Activated naive CD4-positive, alpha-beta T cell treated with anti-CD3 and anti-CD28 coated beads for 36 hours (primary cell): ENCODE measurements at regions of chr13 and their contacts with region 1.

Region 1: GRCh38 chr13:25847145-25847544 is 204.7 kb downstream of the SHISA2 start:
- DNase-seq: peak; percentile 22
- H3K4me3 Mint-ChIP-seq: no peak overlapping the region
- H3K27ac Mint-ChIP-seq: peak overlapping the region; percentile 22
- H3K4me1 Mint-ChIP-seq: peaks cover 35% of the 10 kb centered on the region
- H3K27me3 Mint-ChIP-seq: peaks cover under 1% of the 10 kb centered on the region

Region 2: GRCh38 chr13:25806264-25806974 is 40.7 kb before region 1 on chr13:
- CTCF ChIA-PET with region 1: no interaction called
- intact Hi-C with region 1: loop called (anchors 1 kb)
- DNase-seq: peak; percentile 7
- H3K4me3 Mint-ChIP-seq: no peak overlapping the region
- H3K27ac Mint-ChIP-seq: peak overlapping the region; percentile 50
- H3K4me1 Mint-ChIP-seq: peaks cover 12% of the 10 kb centered on the region
- H3K27me3 Mint-ChIP-seq: peaks cover 18% of the 10 kb centered on the region

Region 3: DNA sequence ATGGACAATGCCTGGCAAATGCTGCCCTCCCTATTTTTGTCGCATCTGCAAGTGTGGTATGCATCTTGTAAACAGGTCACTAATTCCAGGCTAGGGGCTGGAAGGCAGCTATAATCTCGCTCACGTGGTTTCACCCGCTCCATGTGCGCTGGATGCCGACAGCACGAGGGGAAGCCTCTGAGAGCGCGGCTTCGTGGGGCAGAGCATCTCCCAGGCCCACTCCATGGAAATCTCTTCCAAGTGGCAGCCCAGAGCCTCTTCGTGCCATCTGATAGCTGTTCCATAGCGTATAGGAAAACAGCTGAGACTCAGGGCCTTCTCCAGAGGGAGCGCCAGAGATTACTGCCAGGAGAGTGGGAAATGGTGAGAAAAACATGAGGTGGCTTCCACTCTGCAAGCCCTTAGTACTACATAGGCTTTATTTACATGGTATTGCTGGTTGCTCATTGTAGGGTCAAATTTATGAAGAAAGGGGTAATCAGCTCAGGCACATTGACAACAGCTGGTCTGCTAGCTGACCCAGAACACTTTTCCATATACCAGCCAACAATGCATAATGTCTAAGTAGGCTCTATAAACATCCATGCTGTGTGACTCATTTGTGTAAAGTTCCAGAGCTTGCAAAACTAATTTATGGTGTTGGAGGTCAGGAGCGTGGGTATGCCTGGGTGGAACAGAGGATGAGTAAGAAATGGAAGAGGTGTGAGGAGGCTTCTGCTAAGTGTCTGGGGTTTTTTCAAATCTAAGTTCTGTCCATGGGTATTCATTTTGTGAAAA is 39.5 kb after region 1 on chr13:
- CTCF ChIA-PET with region 1: no interaction called
- intact Hi-C with region 1: loop called (anchors 1 kb)
- DNase-seq: peak; percentile 51
- H3K4me3 Mint-ChIP-seq: no peak overlapping the region
- H3K27ac Mint-ChIP-seq: peak overlapping the region; percentile 16
- H3K4me1 Mint-ChIP-seq: peaks cover 66% of the 10 kb centered on the region
- H3K27me3 Mint-ChIP-seq: no peaks in the 10 kb centered on the region

Region 4: DNA sequence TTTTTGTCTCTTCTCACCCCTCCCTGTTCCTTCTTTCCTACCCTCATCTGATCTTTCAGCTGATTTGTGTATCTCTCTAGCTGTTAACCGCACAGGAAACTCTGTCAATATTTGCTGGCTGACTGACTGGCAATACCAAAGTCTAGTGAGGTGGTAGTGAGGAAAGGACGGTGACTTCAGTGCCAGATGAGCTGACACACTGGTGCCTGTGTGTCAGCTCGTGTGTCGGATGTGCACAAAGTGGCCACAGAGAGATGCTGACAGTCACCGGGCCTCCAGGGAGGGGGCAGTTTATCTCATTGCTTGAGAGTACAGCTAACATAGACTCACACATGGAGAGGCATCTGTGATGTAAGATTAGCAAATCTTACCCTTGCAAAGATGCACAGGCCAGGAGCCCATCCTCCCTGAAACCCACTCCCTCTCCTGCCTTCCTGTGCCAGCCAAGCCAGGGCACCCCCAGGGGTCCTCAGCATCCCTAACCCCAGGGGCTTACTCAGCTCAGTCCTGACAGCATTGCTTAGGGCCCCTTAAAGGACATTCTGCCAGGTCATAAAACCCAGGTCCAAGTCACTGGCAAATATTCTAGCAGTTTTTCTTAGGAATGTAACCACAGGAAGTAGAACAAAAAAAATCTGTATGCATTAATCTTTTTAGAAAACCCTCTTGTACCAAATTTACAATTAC is 124.5 kb after region 1 on chr13:
- CTCF ChIA-PET with region 1: no interaction called
- intact Hi-C with region 1: loop called (anchors 1 kb)
- DNase-seq: peak; percentile 76
- H3K4me3 Mint-ChIP-seq: no peak overlapping the region
- H3K27ac Mint-ChIP-seq: peak overlapping the region; percentile 46
- H3K4me1 Mint-ChIP-seq: peaks cover 42% of the 10 kb centered on the region
- H3K27me3 Mint-ChIP-seq: no peaks in the 10 kb centered on the region

Region 5: DNA sequence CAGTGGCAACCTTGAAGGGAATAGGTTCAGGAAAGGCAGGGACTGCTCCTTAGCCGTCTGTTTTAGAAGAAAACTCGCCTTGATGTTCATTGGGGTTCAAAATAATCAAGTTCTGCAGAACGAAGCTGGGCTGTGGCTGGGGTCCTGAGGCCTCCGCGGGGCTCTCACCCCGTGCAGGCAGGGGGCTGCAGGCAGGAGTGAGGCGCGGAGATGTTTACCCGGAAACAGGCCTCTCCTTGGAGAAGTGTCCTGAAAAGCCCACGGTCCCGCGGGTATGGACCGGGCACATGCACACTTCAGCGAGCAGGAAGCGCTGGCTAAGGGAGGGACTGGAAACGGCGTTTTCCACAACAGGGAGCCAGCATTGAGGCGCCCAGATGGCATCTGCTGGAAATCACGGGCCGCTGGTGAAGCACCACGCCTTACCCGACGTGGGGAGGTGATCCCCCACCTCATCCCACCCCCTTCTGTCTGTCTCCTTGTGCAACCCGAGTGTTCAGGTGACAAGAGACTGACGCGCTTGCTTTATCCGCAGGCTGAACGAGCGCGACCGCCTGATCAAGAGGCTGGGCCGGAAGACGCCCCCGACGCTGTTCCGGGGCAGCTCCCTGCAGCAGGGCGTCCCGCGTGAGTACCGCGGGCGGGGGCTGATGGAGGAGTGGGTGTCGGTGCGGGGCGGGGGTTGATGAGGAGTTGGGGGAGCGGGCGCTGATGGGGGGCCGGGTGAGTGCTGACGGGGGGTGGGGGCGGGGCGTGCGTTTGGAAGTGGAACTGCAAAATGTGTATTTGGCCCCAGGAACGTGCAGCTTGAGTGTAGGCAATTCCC is 165.1 kb after region 1 on chr13:
- CTCF ChIA-PET with region 1: no interaction called
- intact Hi-C with region 1: no loop called
- DNase-seq: peak; percentile 70
- H3K4me3 Mint-ChIP-seq: peak overlapping the region; percentile 74
- H3K27ac Mint-ChIP-seq: peak overlapping the region; percentile 72
- H3K4me1 Mint-ChIP-seq: peaks cover 25% of the 10 kb centered on the region
- H3K27me3 Mint-ChIP-seq: no peaks in the 10 kb centered on the region

Region 6: GRCh38 chr13:26051657-26052311 is 204.6 kb after region 1 on chr13 and contains the start of gene SHISA2:
- CTCF ChIA-PET with region 1: no interaction called
- intact Hi-C with region 1: loop called (anchors 5 kb)
- DNase-seq: peak; percentile 34
- H3K4me3 Mint-ChIP-seq: peak within 1 kb of the TSS; percentile 66
- H3K27ac Mint-ChIP-seq: no peak within 1 kb of the TSS
- H3K4me1 Mint-ChIP-seq: peaks cover 19% of the 10 kb centered on the region
- H3K27me3 Mint-ChIP-seq: peaks cover 15% of the 10 kb centered on the region
- total RNA-seq, gene SHISA2: 0.52 to 0.69 TPM